Activated T-helper 2 cell treated with anti-CD3 and anti-CD28 coated beads, Interferon-gamma antibody, Interleukin-2, Interleukin-4, amounts not matched to agents 10 μg/mL and 5 μg/mL and 100 μg/mL, durations not matched to agents 14 hours and 24 hours and 36 hours (primary cell): ENCODE measurements at regions of chr6 and their contacts with region 1.

Region 1: GRCh38 chr6:142395768-142396231 is 94.0 kb downstream of the ADGRG6 start:
- DNase-seq: no peak
- H3K4me3 Mint-ChIP-seq: no peak overlapping the region
- H3K27ac Mint-ChIP-seq: no peak overlapping the region
- H3K4me1 Mint-ChIP-seq: peaks cover 12% of the 10 kb centered on the region
- H3K27me3 Mint-ChIP-seq: peaks cover 61% of the 10 kb centered on the region

Region 2: DNA sequence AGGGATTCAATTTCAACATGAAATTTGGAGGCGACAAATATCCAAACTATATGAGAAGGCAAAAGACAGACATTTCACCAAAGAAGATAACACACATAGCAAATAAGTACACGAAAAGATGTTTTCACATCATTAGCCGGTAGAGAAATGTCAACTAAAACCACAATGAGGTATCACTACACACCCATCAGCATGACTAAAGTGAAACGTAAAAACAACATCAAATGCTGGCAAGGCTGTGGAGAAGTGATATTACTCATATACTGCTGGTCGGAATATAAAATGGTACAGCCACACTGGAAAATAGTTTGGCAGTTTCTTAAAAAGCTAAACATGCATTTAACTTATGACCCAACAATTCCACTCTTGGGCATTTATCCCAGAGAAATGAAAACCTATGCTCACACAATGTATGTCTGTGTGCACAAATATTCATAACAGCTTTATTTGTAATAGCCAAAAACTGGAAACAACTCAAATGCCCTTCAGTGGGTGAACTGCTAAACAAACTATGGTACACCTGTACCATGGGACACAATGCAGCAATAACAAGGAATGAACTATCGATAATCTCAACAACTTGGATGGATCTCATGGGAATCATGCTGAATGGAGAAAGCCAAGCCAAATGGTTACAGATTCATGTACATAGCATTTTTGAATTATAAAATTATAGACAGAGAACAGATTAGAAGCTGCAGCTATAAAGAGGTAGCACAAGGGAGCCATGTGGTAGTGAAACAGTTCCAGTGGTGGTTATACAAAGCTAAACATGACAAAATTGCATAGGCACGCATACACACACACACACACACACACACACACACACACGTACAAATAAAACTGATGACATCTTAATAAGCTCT is 1046.1 kb after region 1 on chr6:
- intact Hi-C with region 1: loop called (anchors 5 kb)
- DNase-seq: peak; percentile 11
- H3K4me3 Mint-ChIP-seq: peak overlapping the region; percentile 15
- H3K27ac Mint-ChIP-seq: peak overlapping the region; percentile 92
- H3K4me1 Mint-ChIP-seq: peaks cover 59% of the 10 kb centered on the region
- H3K27me3 Mint-ChIP-seq: no peaks in the 10 kb centered on the region